ENCODE measurements at regions of chr6 and their contacts with region 1.

Region 1: GRCh38 chr6:111642463-111643158 is 36.9 kb upstream of the TRAF3IP2 start:
- DNase-seq: peak in 1 of 2 donors; percentile 80
- H3K4me3 ChIP-seq: no peak overlapping the region
- H3K27ac ChIP-seq: no peak overlapping the region
- H3K4me1 ChIP-seq: no peaks in the 10 kb centered on the region
- H3K27me3 ChIP-seq: no peaks in the 10 kb centered on the region
- CTCF ChIP-seq: peak; percentile 51 to 69 (median 59)

Region 2: GRCh38 chr6:111361648-111362047 is 281.0 kb before region 1 on chr6:
- intact Hi-C with region 1: loop called (anchors 2 kb)
- DNase-seq: no peak
- H3K4me3 ChIP-seq: no peak overlapping the region
- H3K27ac ChIP-seq: no peak overlapping the region
- H3K4me1 ChIP-seq: no peaks in the 10 kb centered on the region
- H3K27me3 ChIP-seq: no peaks in the 10 kb centered on the region
- CTCF ChIP-seq: peak in 2 of 3 experiments; percentile 22 to 56